Right ventricle myocardium inferior (tissue), 1 donor: ENCODE measurements at regions of chr7 and their contacts with region 1.

Region 1: DNA sequence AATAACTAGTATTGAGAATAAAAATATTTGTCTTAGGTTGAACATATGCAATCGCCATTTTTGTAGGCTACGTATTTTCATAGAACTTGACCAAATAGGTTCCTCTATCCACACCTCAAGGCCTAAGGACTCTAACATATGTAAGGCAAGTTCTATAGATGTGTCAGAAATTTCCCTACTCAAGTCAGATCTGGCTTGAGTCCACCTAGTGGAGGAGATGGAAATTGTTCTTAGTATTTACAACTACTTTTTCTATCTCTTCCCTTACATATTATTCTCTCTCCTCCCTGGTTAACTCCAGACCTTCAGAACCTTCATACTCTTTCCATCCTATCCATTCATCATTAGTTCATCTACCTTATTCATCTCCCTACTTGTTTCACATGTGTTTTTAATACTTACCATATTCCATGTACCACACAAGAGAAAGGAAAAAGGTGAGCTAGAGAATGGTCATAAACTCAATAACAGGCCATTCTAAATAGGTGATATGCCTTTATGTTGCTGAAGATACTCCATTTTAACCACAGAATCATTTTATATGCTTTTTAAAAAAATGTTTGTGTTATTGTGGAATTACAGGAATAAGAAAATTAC is 174.5 kb upstream of the HDAC9 start:
- DNase-seq: no peak
- ATAC-seq: no peak

Region 2: GRCh38 chr7:17991866-17992648 is 329.0 kb before region 1 on chr7:
- intact Hi-C with region 1: loop called (anchors 10 kb)
- DNase-seq: no peak
- ATAC-seq: no peak

Region 3: DNA sequence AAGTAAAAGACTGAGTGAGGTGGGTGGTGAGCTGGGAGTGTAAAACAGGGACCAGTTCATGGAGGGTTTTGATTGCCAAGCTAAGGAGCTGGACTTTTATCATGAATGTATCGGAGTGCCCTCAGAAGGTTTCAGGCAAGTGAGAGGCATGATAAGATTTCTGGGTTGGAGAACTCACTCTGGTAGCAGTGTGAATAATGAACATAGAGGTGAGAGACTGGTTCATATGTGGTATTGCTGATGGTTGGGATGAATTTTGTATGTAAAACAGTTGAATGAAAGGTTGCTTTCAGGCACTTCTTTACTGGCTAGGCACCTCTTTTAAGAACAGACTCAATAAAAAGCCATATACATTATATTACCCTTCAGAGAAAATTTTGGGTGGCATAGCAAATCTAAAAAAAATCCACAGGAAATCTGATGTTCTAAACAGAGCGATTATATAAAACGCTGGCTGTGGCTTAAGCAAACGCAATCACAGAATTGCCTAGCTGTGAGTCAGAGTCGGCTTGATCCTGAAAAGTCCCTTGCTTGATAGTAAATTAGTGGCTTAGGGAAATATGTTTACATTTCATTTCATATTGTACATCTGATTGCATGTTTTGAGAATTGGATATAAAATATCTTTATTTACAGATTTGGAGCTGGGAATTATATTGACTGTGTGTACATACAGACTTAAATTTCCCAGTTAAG is 81.6 kb after region 1 on chr7:
- intact Hi-C with region 1: no loop called
- DNase-seq: no peak
- ATAC-seq: no peak